Cardiac septum (tissue), 1 donor: ENCODE measurements at regions of chr12 and their contacts with region 1.

Region 1: GRCh38 chr12:49809381-49809905 is 18.8 kb downstream of the NCKAP5L start:
- DNase-seq: no peak

Region 2: DNA sequence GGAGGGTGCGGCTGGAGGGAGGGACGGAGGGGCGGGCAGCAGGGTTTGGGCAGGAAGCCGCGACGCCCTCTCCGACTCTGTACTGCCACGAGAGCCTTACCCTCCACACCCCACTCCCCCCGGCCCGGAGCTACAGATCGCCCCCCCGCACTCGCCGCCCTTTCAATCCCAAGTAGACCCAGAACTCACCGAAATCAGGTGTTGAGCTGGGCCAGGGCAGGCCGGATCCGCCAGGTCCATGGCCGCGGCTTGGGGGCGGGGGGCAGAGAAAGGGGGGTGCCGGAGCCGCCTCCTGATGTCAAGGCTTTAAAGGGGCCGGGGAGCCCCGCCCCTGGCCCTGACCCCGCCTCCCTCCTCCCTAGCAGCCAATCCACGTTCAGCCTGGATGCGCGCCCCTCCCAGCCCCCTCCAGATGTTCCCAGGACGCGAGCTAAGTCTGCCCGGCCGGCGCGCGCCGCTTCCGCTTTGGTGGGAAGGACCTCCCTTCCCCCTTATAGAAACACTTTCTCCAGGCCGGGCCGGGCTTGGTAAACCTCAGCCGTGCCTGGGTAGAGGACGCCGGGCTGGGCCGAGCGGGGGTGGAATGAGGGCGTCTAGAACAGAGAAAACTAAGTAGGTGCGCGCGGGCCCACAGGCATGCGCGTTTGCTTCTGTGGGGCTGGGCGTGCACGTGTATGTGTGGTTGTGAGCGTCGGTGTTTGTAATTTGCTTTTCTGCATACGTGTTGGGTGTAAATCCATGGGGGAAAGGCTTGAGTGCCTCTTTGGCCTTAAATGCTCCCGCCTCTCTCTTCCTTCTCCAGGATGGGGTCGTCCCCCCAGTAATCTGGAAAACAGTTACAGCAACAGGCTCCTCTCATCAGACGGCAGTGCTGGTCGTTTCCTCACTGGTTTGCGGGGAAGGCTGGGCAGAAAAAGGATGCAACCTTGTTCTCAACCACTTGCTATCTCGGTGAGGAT is 19.0 kb after region 1 on chr12 and contains the start of gene NCKAP5L:
- intact Hi-C with region 1: loop called (anchors 2 kb)
- DNase-seq: peak; percentile 99
- total RNA-seq, gene NCKAP5L: 26.5 TPM

Region 3: DNA sequence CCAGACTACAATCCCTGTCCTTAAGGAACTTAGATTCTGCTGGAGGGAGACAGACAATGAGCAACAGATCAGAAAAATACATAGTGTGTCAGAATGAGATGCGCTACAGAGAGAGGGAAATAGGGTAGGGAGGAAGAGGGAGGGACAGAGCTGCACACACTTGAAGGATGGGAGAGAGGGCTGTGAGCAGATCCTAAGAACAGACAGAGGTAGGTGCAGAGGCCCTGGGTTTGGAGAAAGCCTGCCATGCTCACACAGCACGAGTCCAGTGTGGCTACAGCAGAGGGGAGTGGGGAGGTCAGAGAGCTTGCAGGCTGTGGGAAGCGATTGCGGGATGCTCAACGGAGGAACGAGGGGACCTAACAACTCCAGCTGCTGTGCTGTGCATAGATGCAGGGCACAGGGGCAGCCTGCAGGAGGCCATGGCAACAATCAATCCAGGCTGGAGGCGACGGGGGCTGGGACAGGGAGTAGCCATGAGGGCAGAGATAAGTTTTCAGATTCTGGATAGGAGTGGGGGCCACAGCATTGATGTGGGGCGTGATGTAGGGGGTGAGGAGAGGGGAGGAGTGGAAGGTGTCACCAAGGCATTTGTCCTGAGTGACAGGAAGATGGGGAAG is 73.5 kb after region 1 on chr12:
- intact Hi-C with region 1: no loop called
- DNase-seq: no peak